GM13976 (cell line): ENCODE measurements at regions of chr4 and their contacts with region 1.

Region 1: DNA sequence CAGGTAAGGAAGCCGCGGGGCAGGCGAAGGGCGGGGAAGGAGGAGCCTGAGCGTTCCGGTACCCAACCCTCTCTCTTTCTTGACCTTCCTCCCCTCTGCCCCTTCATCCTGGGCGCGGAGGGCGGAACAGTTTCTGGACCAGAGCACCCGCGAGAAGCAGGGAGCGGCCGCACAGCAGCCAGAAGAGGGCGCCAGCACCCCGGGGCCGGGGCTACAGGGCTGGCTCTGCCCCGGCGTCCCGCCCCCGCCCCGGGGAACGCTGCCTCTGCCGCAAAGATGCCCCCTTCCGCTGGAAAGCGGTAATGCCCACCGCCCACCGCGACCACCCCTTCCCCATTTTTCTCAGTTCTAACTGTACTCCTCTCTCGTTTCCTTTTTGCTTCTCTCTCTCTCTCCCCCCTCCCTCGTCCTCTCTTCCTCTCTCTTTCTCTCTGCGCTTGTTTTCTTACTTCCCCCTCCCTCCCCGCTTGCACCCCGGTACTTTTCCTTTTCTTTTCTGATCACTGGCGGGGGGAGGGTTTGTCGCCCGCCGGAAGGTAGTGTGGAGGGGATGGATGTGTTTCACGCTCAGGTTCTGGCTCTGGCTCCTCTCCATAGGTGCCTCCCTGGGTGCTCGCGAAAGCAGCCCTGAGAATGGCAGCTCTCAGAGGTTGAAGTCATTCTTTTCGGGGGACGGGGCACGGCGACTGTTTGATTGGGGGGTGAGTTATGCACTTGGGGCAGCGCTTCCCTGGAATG is 13.1 kb upstream of the PRDM8 start:
- DNase-seq: peak; percentile 92
- CTCF ChIP-seq: peak; percentile 88

Region 2: GRCh38 chr4:79578606-79579005 is 605.6 kb before region 1 on chr4:
- in situ Hi-C with region 1: no loop called
- DNase-seq: no peak
- CTCF ChIP-seq: no peak

Region 3: GRCh38 chr4:79623021-79623870 is 561.0 kb before region 1 on chr4:
- in situ Hi-C with region 1: no loop called
- DNase-seq: no peak
- CTCF ChIP-seq: no peak

Region 4: DNA sequence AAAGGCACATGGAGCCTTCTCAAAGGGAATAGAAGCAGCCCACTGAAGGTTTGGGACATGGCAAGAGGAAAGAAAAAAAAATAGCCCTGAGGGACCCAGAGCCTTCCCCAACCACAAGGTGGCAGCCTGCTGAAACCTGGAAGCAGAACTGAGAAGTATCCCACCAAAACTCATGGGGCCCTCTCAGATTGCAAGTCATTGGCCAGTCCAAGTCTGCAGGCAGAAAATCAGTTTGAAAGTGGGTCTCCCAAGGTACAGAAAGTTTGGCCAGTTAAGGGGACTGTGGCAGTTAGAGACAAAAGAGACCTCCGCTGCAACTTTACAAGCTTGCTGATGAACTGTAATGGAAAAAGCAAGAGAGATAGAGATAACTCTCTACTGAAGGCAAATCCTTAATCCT is 267.0 kb before region 1 on chr4:
- in situ Hi-C with region 1: loop called (anchors 25 kb)
- DNase-seq: no peak
- CTCF ChIP-seq: peak; percentile 47

Region 5: GRCh38 chr4:80370635-80371034 is 186.4 kb after region 1 on chr4:
- in situ Hi-C with region 1: no loop called
- DNase-seq: no peak
- CTCF ChIP-seq: no peak

Region 6: DNA sequence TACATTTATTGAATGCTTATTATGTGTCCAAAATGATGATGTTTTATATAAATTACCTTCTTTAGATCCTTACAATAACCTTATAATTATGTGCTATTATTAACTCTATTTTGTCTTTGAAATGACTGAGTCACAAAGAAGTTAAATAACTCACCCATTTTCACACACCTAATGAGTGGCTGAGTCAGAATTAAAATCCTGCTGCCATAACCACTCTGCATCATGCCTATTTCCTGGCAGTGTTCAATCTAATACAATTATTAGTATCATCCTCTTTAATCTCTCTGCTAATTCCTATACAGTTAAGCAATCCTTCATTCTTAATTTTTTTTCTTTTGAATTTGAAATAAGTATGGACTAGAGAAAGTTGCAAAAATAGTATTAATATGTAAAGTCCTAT is 494.2 kb after region 1 on chr4:
- in situ Hi-C with region 1: no loop called
- DNase-seq: no peak
- CTCF ChIP-seq: no peak